ENCODE measurements at regions of chr10 and their contacts with region 1.

Region 1: GRCh38 chr10:96395931-96396877 is 37.4 kb upstream of the OPALIN start:
- DNase-seq: peak; percentile 77
- ATAC-seq: peak; percentile 87
- H3K4me3 Mint-ChIP-seq: peak overlapping the region; percentile 62
- H3K27ac Mint-ChIP-seq: no peak overlapping the region
- H3K4me1 Mint-ChIP-seq: peaks cover 24% of the 10 kb centered on the region
- H3K27me3 Mint-ChIP-seq: no peaks in the 10 kb centered on the region
- CTCF ChIP-seq: peak; percentile 82

Region 2: DNA sequence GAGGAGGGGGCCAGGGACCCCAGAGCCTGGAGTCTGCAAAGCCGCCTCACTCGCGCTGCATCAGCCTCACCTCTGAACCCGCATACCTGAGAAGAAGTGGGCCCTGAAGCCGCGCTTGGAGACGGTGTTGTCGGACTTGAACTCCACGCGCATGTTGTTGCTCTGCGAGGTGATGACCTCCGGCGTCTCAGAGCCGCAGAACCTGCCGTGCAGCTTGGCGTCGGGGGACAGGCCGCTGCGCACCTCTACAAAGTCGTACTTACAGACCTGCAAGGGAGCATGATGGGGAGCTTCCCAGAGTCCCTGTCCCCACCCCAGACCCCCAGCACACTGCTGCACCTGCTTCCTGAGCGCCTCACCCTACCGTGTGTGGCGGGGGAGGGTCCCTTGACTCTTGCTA is 11.7 kb before region 1 on chr10:
- CTCF ChIA-PET with region 1: interaction called, 21 read pairs
- POLR2A ChIA-PET with region 1: no interaction called
- DNase-seq: no peak
- ATAC-seq: no peak
- H3K4me3 Mint-ChIP-seq: no peak overlapping the region
- H3K27ac Mint-ChIP-seq: no peak overlapping the region
- H3K4me1 Mint-ChIP-seq: 0 out of 2 replicates have a peak, but pooled peaks cover 3% of the 10 kb centered on the region
- H3K27me3 Mint-ChIP-seq: no peaks in the 10 kb centered on the region
- CTCF ChIP-seq: no peak

Region 3: GRCh38 chr10:96450529-96451207 is 54.5 kb after region 1 on chr10:
- CTCF ChIA-PET with region 1: interaction called, 15 read pairs
- POLR2A ChIA-PET with region 1: no interaction called
- DNase-seq: peak; percentile 69
- ATAC-seq: peak; percentile 91
- H3K4me3 Mint-ChIP-seq: peak overlapping the region; percentile 57
- H3K27ac Mint-ChIP-seq: peak overlapping the region; percentile 100
- H3K4me1 Mint-ChIP-seq: peaks cover 80% of the 10 kb centered on the region
- H3K27me3 Mint-ChIP-seq: no peaks in the 10 kb centered on the region
- CTCF ChIP-seq: no peak

Region 4: DNA sequence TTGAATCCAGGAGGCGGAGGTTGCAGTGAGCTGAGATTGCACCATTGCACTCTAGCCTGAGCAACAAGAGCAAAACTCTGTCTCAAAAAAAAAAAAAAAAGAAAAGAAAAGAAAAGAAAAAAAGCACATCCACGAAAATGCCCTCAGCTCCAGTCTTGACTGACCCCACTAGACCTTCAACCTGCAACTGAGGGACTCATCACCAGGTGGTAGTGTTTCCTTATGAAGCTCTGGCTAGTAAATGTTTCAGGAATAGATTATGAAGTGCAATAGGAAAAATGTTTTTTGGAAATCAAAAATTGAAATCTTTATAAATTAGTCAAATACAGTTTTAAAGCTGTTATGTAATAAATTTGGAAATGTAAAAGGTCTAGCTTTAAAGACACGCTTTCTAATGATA is 95.1 kb after region 1 on chr10:
- CTCF ChIA-PET with region 1: interaction called, 16 read pairs
- POLR2A ChIA-PET with region 1: no interaction called
- DNase-seq: no peak
- ATAC-seq: peak; percentile 53; the same call in 1 of the 2 replicates
- H3K4me3 Mint-ChIP-seq: no peak overlapping the region
- H3K27ac Mint-ChIP-seq: no peak overlapping the region
- H3K4me1 Mint-ChIP-seq: peaks cover 34% of the 10 kb centered on the region
- H3K27me3 Mint-ChIP-seq: no peaks in the 10 kb centered on the region; the same call in 1 of the 2 replicates
- CTCF ChIP-seq: no peak

Region 5: DNA sequence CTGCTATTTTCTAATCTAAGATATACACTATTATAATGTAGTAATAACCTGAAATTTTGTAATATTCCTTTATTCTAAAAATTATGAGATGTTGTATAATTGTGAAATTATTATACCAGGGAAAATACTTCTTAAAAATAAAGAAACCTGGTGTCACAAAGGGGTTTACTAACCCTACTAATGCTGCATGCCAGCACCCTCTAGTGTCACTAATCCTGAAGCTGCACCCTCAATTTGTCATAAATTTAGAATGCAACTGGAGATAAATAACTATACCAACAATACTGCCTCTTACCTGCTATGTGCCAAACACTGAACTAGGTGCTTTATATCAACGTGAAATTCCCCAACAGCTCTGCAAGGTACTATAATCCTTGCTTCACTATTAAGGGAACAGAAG is 159.8 kb after region 1 on chr10:
- CTCF ChIA-PET with region 1: interaction called, 21 read pairs
- POLR2A ChIA-PET with region 1: no interaction called
- DNase-seq: no peak
- ATAC-seq: no peak
- H3K4me3 Mint-ChIP-seq: no peak overlapping the region
- H3K27ac Mint-ChIP-seq: no peak overlapping the region
- H3K4me1 Mint-ChIP-seq: no peaks in the 10 kb centered on the region
- H3K27me3 Mint-ChIP-seq: no peaks in the 10 kb centered on the region
- CTCF ChIP-seq: no peak

Region 6: GRCh38 chr10:96614515-96614914 is 218.3 kb after region 1 on chr10:
- CTCF ChIA-PET with region 1: no interaction called
- POLR2A ChIA-PET with region 1: no interaction called
- DNase-seq: no peak
- ATAC-seq: no peak
- H3K4me3 Mint-ChIP-seq: no peak overlapping the region
- H3K27ac Mint-ChIP-seq: no peak overlapping the region
- H3K4me1 Mint-ChIP-seq: peaks cover 7% of the 10 kb centered on the region
- H3K27me3 Mint-ChIP-seq: no peaks in the 10 kb centered on the region; the same call in 1 of the 2 replicates
- CTCF ChIP-seq: no peak

Measured in WTC11 (cell line).